ENCODE measurements at regions of chr2 and their contacts with region 1.

Region 1: GRCh38 chr2:235050992-235051351 is 99.2 kb downstream of the SH3BP4 start:
- DNase-seq: peak; percentile 88
- H3K4me3 ChIP-seq: no peak overlapping the region
- H3K27ac ChIP-seq: peak overlapping the region; percentile 69
- H3K4me1 ChIP-seq: peaks cover 28% of the 10 kb centered on the region
- H3K27me3 ChIP-seq: no peaks in the 10 kb centered on the region
- CTCF ChIP-seq: peak in 1 of 2 donors; percentile 10
- POLR2A ChIP-seq: no peak

Region 2: GRCh38 chr2:234823877-234824376 is 227.0 kb before region 1 on chr2:
- CTCF ChIA-PET with region 1: no interaction called
- POLR2A ChIA-PET with region 1: no interaction called
- dilution Hi-C with region 1: no loop called
- intact Hi-C with region 1: loop called (anchors 1 kb)
- DNase-seq: peak; percentile 98
- H3K4me3 ChIP-seq: no peak overlapping the region
- H3K27ac ChIP-seq: peak overlapping the region; percentile 90
- H3K4me1 ChIP-seq: peaks cover 24% of the 10 kb centered on the region
- H3K27me3 ChIP-seq: no peaks in the 10 kb centered on the region
- CTCF ChIP-seq: no peak
- POLR2A ChIP-seq: peak; percentile 69

Region 3: DNA sequence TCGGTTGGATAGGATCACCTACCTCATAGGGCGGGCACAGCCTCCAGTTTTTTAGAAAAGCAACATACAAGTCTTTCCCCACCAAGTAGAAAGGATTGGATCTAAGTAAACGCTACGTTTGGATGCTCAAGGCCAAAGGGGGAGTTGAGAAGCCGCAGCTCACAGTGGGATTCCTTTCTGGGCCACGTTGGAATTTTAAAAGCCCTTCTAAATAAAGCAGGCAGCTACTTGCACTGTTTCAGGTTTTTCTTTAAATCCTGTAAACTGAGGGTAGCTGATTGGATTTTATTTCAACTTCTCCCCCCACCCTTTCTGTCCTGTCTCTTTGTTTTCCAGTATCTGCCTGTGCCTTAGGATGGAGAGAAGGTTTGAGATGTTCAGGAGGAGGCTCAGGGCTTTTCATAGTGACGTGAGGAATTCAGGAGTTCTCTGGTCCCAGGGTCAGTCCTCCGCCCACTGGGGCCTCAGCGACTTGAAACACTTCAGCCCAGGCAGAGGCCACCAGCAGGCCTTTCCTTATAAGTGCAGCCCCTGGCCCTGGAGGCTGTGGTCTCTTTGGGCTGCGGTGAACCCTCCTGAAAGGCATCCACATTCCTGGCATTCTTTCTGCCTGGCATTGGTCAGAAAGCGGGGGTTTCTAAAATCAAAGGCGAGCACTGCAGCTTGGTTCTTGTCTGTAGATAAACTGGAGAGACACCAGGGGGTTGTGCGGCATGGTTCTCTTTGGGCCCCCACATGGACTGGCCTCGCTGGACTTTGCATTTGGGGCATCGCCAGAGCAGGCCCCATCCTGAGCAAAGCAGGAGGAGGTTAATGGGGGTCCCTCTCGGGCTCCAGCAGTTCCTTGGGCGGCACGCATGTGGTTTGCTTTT is 54.7 kb before region 1 on chr2:
- CTCF ChIA-PET with region 1: no interaction called
- POLR2A ChIA-PET with region 1: no interaction called
- dilution Hi-C with region 1: no loop called
- intact Hi-C with region 1: loop called (anchors 5 kb)
- DNase-seq: peak; percentile 64
- H3K4me3 ChIP-seq: no peak overlapping the region
- H3K27ac ChIP-seq: peak overlapping the region; percentile 88
- H3K4me1 ChIP-seq: peaks cover 56% of the 10 kb centered on the region
- H3K27me3 ChIP-seq: no peaks in the 10 kb centered on the region
- CTCF ChIP-seq: peak; percentile 41 to 53
- POLR2A ChIP-seq: no peak

Region 4: DNA sequence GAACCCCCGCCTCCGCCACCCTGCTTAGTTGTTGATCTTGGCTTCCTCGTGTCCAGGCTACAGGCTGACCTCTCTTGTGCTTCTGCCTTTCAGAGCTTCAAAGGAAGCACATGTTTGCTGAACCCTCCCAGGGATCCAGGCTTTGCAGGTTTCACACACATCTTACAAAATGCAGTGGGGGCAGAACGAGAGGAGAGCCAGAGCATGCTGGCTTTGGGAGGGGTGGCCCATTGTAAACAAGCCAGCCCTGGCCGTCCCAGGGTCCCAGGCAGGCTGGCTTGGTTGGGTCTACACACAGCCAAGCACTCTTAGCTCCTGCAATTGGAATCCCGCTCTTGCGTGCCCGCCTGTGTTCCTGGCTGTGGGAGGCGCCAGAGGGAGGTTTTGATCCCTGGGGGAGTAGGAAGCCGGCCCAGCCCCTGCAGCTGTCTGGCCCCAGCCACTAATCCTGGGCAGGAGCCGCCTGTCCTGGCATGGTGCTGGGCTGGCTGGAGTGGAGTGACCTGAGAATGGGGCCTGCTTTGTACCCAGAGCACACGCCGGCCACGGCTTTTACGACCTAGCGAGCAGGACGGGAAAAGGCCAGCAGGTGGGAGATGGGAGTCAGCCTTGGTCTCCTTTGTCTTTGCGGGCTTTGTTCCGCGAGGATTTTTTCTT is 45.2 kb before region 1 on chr2:
- CTCF ChIA-PET with region 1: interaction called, 3 read pairs
- POLR2A ChIA-PET with region 1: no interaction called
- dilution Hi-C with region 1: no loop called
- intact Hi-C with region 1: loop called (anchors 1 kb)
- DNase-seq: peak; percentile 75
- H3K4me3 ChIP-seq: no peak overlapping the region
- H3K27ac ChIP-seq: peak overlapping the region; percentile 43
- H3K4me1 ChIP-seq: peaks cover 17% of the 10 kb centered on the region
- H3K27me3 ChIP-seq: no peaks in the 10 kb centered on the region
- CTCF ChIP-seq: peak; percentile 25 to 26
- POLR2A ChIP-seq: no peak

Region 5: DNA sequence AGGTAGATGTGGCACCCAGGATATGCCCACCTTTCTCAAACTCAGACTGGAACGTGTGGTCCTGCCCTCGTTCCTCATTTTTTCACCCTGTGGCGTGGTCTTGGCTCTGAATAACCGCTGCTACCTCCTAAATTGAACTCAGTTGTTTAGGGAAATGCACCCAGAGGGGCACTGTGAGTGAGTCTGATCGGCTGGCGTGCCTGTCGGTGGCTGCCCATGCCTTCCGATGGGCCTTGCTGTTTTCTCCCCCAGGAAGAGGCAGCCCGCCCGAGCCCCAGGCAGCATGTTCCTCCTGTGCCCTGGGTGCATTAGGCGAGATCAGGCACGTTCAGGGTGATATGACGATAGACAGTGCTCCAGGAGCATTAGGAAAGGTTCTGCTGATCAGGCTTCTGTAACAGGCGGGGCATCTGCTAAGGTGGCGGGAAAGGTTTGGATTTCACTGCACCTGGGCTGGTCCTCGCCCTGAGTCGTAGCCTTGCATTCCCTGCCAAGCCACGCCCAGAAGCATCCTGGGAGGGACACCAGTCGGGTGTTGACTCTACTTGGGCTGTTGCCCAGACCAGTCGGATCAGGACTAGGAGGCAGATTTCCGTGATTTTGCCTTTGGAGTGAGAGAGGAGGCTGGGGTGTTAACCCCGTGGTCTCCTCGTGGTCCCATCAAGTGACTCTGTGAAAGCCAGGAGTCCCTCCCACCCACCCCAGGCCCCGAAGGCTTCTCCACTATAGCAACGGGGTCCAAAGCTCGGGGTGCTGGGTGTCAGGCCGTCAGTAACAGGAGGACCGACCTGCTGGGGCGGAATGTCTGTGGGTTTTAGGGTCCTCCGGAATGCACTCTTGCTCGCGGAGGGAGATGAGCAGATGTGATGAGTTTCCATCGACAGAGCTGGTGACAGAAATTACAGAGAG is 24.1 kb before region 1 on chr2:
- CTCF ChIA-PET with region 1: interaction called, 6 read pairs
- POLR2A ChIA-PET with region 1: interaction called, 3 read pairs
- dilution Hi-C with region 1: no loop called
- intact Hi-C with region 1: loop called (anchors 1 kb)
- DNase-seq: peak; percentile 21
- H3K4me3 ChIP-seq: no peak overlapping the region
- H3K27ac ChIP-seq: peak overlapping the region; percentile 76
- H3K4me1 ChIP-seq: peaks cover 60% of the 10 kb centered on the region
- H3K27me3 ChIP-seq: no peaks in the 10 kb centered on the region
- CTCF ChIP-seq: no peak
- POLR2A ChIP-seq: no peak

Measured in endothelial cell of umbilical vein (primary cell).